PC-9 (cell line): ENCODE measurements at regions of chr6 and their contacts with region 1.

Region 1: DNA sequence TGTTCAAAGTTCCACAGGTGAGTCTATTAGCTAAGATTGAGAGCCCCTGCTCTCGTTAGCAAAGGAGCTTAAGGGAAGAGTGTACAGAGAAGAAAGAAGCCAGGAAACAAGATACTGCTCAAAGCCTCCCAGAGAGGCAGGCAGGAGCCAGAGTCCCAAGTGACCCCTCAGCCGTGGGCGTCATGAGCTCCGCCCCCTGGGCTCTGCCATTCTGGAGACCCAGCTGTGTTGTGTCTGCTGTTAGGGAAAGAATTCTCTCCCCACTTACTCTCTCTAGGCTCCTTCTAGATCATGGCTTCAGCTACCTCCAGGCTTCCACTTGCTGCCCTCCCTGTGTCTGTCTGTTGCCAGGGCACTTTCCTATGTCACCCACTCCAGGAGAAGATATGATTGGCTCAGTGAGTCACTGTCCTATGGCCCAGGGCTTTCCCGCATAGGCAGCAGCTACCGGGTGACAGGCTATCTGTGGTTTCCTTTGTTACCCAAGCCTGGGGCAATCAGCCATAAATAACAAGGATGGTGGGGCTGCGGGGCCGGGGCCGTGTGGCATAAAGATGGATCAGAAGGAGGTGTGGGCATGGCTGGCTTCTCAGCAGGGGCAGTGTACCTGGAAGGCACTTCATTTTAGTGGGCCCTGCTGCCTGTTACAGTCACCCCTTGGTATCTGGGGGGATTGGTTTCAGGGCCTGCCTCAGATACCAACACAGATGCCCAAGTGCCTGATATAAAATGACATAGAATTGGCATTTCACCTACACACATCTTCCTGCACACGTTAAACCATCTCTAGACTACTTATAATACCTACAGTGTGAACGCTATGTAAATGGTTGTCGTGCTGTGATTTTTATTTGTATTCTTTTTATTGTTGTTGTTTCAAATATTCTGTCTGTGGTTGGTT is 118.9 kb downstream of the ARMC2 start:
- DNase-seq: peak; percentile 77 to 93
- H3K4me3 ChIP-seq: peak overlapping the region; percentile 24; the same call in 1 of the 2 replicates
- H3K27ac ChIP-seq: peak overlapping the region; percentile 53
- H3K4me1 ChIP-seq: peaks cover 62% of the 10 kb centered on the region
- H3K27me3 ChIP-seq: no peaks in the 10 kb centered on the region
- CTCF ChIP-seq: no peak

Region 2: DNA sequence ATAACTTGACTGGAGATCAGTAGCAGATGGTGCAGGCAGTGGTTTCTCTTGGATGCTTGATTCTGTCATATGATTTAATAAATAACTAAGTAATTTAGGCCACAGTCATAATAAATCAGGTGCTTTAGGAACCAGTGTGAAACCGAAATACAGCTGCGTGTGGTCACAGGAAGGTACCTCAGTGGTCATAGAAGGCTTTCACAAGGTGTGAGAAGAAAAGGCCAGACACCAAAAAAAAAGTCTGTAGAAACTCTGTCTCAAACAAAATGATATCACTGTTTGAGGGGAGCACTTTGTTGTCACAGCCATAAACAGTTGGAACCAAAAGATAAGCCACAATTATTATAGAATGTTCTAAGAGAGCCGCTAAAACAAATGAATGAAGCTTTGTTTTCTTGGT is 62.4 kb before region 1 on chr6:
- CTCF ChIA-PET with region 1: no interaction called
- POLR2A ChIA-PET with region 1: no interaction called
- intact Hi-C with region 1: no loop called
- DNase-seq: no peak
- H3K4me3 ChIP-seq: no peak overlapping the region
- H3K27ac ChIP-seq: no peak overlapping the region
- H3K4me1 ChIP-seq: no peaks in the 10 kb centered on the region
- H3K27me3 ChIP-seq: no peaks in the 10 kb centered on the region
- CTCF ChIP-seq: no peak

Region 3: GRCh38 chr6:108947114-108947854 is 19.8 kb before region 1 on chr6:
- CTCF ChIA-PET with region 1: interaction called, 3 read pairs
- POLR2A ChIA-PET with region 1: interaction called, 7 read pairs
- intact Hi-C with region 1: loop called (anchors 1 kb)
- DNase-seq: peak; percentile 54 to 99
- H3K4me3 ChIP-seq: no peak overlapping the region
- H3K27ac ChIP-seq: peak overlapping the region; percentile 75
- H3K4me1 ChIP-seq: peaks cover 33% of the 10 kb centered on the region
- H3K27me3 ChIP-seq: no peaks in the 10 kb centered on the region
- CTCF ChIP-seq: no peak

Region 4: DNA sequence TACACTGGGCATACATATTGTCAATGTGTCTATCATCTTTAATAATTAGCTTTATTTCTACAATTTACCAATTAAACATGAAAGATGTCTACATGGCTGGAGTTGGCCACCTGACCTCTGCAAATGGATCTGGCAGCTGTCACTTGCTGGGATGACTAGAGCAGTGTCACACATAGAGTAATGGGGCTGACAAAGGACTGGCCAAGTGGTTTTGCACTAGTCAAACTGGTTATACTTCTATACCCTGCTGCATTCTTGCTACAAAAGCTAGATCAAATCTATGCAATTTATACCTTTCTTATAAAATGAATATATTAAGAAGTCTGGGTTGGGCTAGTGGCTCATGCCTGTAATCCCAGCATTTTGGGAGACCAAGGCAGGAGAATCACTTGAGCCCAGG is 28.2 kb after region 1 on chr6:
- CTCF ChIA-PET with region 1: interaction called, 3 read pairs
- POLR2A ChIA-PET with region 1: no interaction called
- intact Hi-C with region 1: loop called (anchors 2 kb)
- DNase-seq: peak; percentile 22 to 86
- H3K4me3 ChIP-seq: no peak overlapping the region
- H3K27ac ChIP-seq: no peak overlapping the region
- H3K4me1 ChIP-seq: peaks cover 25% of the 10 kb centered on the region
- H3K27me3 ChIP-seq: no peaks in the 10 kb centered on the region
- CTCF ChIP-seq: no peak

Region 5: GRCh38 chr6:109009236-109009961 is 42.3 kb after region 1 on chr6:
- CTCF ChIA-PET with region 1: no interaction called
- POLR2A ChIA-PET with region 1: no interaction called
- intact Hi-C with region 1: loop called (anchors 1 kb)
- DNase-seq: peak; percentile 75 to 87
- H3K4me3 ChIP-seq: peak overlapping the region; percentile 82
- H3K27ac ChIP-seq: peak overlapping the region; percentile 53
- H3K4me1 ChIP-seq: peaks cover 31% of the 10 kb centered on the region
- H3K27me3 ChIP-seq: no peaks in the 10 kb centered on the region
- CTCF ChIP-seq: no peak